PC-3 (cell line): ENCODE measurements at regions of chr17 and their contacts with region 1.

Region 1: DNA sequence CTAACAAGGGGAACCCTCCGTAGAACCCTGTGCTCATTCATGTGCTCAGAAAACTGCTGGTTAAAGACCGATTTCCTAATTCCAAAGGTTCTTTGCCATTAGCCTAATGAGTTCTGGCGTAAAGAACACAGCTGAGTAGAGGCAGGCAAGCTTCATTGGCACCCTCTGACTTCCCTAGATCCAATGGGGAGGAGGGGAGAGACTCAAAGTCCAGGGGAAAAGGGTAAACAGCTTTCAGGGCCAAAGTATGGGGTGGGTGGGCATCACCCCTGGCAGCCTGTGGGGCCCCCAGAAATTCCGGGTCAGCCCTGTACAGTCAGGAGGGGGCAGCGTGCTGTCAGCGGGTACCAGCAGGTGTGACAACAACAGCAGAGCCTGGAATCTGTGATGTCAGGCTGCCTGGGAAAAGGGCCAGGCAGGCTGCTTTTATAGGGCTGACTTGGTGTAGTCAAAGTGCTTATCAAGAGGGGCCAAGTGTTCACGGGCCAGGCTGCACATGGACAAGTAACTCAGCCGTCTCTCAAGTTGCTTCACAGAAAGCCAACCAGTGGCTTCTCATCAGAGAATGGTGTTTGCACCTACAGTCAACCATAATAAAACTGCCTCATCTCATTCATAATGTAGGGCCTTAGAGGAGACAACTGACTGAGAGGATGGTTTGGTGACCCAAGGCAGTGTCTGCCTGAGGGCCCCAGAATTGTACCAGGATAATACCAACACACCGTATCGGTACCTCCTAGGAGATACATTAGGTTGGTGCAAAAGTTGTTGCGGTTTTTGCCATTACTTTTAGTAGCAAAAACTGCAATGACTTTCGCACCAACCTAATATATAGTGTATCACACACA is 70.8 kb downstream of the WIPI1 start:
- DNase-seq: peak; percentile 78
- ATAC-seq: peak; percentile 82
- H3K4me3 ChIP-seq: no peak overlapping the region
- H3K27ac ChIP-seq: peak overlapping the region; percentile 31
- H3K4me1 ChIP-seq: peaks cover 24% of the 10 kb centered on the region
- H3K27me3 ChIP-seq: no peaks in the 10 kb centered on the region
- CTCF ChIP-seq: peak; percentile 44

Region 2: DNA sequence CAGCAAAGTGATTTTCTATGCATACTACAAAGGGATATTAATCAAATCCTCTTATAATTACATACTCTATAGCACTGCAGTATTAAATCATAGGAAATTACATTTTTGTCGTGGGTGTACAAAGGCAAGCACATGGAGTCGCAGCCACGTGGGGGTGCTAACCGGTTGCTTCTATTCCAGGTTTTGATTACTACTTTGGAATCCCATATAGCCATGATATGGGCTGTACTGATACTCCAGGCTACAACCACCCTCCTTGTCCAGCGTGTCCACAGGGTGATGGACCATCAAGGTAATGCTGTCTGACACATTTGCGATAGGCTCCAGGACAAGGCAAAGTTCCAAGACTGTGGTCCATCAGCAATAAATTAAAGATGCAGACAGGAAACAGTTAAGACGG is 35.1 kb before region 1 on chr17:
- CTCF ChIA-PET with region 1: no interaction called
- POLR2A ChIA-PET with region 1: no interaction called
- intact Hi-C with region 1: loop called (anchors 5 kb)
- DNase-seq: peak; percentile 19
- ATAC-seq: no peak
- H3K4me3 ChIP-seq: no peak overlapping the region
- H3K27ac ChIP-seq: no peak overlapping the region
- H3K4me1 ChIP-seq: peaks cover 22% of the 10 kb centered on the region
- H3K27me3 ChIP-seq: no peaks in the 10 kb centered on the region
- CTCF ChIP-seq: peak; percentile 52